PC-9 (cell line): ENCODE measurements at regions of chr9 and their contacts with region 1.

Region 1: GRCh38 chr9:4339357-4339756 is 39.5 kb upstream of the GLIS3 start:
- DNase-seq: peak; percentile 72 to 75
- H3K4me3 ChIP-seq: no peak overlapping the region
- H3K27ac ChIP-seq: no peak overlapping the region
- H3K4me1 ChIP-seq: 0 out of 2 replicates have a peak, but pooled peaks cover 3% of the 10 kb centered on the region
- H3K27me3 ChIP-seq: no peaks in the 10 kb centered on the region
- CTCF ChIP-seq: peak; percentile 86

Region 2: GRCh38 chr9:3525836-3526164 is 813.6 kb before region 1 on chr9 and contains the start of gene RFX3:
- CTCF ChIA-PET with region 1: no interaction called
- POLR2A ChIA-PET with region 1: interaction called, 13 read pairs
- intact Hi-C with region 1: no loop called
- DNase-seq: peak; percentile 70 to 83
- H3K4me3 ChIP-seq: peak within 1 kb of the TSS; percentile 87
- H3K27ac ChIP-seq: peak within 1 kb of the TSS; percentile 100
- H3K4me1 ChIP-seq: peaks cover 16% of the 10 kb centered on the region
- H3K27me3 ChIP-seq: no peaks in the 10 kb centered on the region
- CTCF ChIP-seq: no peak
- total RNA-seq, gene RFX3: 4.6 and 8.4 TPM in 2 replicates

Region 3: DNA sequence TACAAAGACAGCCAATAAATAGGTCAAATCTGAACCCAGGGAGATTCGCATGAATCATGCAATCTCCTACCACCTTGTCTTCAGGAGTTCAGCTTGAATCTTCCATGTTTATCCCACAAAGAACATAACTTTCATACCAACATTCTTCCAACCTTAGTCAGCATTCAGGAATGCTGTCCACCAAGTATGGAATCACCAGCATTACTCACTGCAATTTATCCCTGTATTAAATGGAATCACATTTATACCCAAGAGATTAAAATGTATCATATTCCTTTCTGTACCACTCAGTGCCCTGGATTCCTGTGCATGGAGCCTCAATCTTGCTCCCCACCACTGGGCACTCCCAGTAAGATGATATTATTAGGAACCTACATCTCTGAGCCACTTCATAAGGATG is 202.1 kb before region 1 on chr9:
- CTCF ChIA-PET with region 1: no interaction called
- POLR2A ChIA-PET with region 1: no interaction called
- intact Hi-C with region 1: loop called (anchors 1 kb)
- DNase-seq: peak; percentile 47 to 92
- H3K4me3 ChIP-seq: peak overlapping the region; percentile 10; the same call in 1 of the 2 replicates
- H3K27ac ChIP-seq: peak overlapping the region; percentile 92
- H3K4me1 ChIP-seq: peaks cover 39% of the 10 kb centered on the region
- H3K27me3 ChIP-seq: no peaks in the 10 kb centered on the region
- CTCF ChIP-seq: no peak

Region 4: GRCh38 chr9:4228606-4229005 is 110.8 kb before region 1 on chr9:
- CTCF ChIA-PET with region 1: no interaction called
- POLR2A ChIA-PET with region 1: no interaction called
- intact Hi-C with region 1: loop called (anchors 5 kb)
- DNase-seq: no peak
- H3K4me3 ChIP-seq: no peak overlapping the region
- H3K27ac ChIP-seq: no peak overlapping the region
- H3K4me1 ChIP-seq: peaks cover 13% of the 10 kb centered on the region; the same call in 1 of the 2 replicates
- H3K27me3 ChIP-seq: no peaks in the 10 kb centered on the region
- CTCF ChIP-seq: peak; percentile 55

Region 5: DNA sequence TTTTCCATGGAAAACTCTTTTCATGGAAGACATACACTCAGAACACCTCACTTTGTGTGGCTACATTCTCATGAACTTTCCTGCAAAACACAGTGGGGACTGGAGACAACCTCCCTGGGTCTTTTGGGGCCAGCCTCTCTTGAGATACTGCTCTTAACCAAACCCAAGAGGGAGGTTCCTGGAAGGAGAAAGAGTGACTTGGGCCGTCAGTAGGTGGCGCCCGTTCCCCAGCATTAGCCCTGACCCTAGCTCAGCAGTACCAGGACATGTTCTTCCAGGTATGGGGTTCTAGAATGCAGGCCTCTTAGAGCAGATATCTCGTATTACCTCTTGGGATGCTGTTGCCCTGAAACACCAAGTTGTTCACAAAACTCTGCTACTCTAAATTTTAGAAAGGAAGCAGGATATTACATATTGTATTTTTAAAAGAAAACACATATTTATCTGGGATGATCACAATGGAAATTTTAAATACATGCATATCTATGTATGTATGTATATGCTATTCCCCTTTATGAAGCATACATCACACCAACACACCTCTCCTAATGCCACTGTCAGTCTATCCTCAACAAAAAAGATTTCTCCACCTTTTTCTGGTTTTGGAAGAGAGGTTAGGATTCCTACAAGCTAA is 23.7 kb before region 1 on chr9:
- CTCF ChIA-PET with region 1: interaction called, 5 read pairs
- POLR2A ChIA-PET with region 1: interaction called, 5 read pairs
- intact Hi-C with region 1: loop called (anchors 1 kb)
- DNase-seq: peak in 1 of 2 experiments; percentile 64
- H3K4me3 ChIP-seq: no peak overlapping the region
- H3K27ac ChIP-seq: no peak overlapping the region
- H3K4me1 ChIP-seq: no peaks in the 10 kb centered on the region
- H3K27me3 ChIP-seq: no peaks in the 10 kb centered on the region
- CTCF ChIP-seq: peak; percentile 82